GM12878 (cell line): ENCODE measurements at regions of chr11 and their contacts with region 1.

Region 1: DNA sequence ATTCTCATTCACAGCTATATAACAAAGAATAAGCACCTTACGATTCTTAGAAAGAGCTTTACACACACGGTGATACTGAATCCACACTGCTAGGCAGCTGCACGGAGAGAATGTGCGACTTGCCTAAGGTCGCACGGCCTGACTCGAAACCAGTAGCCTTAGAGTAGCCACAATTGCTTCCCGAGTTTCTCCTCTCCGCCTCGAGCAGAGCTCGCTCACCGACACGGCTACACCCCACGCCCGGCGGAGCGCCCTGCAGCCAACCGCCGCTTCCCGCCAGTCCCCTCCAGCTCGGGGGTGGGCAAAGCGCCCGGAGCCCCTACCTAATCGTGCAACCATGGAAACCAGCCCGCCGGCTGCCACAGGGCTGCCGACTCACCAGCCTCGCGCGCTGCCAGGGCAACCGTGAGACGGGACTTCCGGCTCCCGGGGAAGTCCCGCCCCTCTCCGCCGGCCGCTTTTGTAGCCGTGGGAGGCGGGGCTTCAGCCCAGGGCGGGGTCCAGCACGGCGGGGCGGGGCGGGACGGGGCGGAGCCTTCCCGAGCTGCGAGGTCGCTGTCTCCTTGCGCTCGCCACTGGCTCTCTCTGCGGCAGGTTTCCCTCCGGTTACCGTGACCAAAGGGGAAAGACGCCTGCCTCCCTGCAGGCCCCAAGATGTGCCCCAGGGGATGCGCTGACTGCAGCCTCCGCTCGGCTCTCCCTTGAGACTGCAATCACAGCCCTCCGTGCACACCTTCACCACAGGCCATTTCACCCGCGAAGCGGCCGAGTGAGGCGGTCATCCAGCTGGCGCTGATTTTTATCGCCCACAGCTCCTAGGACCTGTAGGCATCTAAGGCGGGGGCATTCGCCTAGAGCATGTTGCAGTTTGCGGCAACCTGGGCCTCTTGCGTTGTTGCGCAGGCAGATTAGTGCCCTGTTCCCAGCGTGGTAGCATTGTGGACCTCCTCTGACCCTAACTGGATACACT is 1.1 kb downstream of the BSCL2 start:
- DNase-seq: peak; percentile 50
- ATAC-seq: peak; percentile 81
- H3K4me3 ChIP-seq: peak overlapping the region; percentile 79
- H3K27ac ChIP-seq: peak overlapping the region; percentile 51
- H3K4me1 ChIP-seq: peaks cover 29% of the 10 kb centered on the region
- H3K27me3 ChIP-seq: no peaks in the 10 kb centered on the region
- CTCF ChIP-seq: no peak
- EP300 ChIP-seq: no peak
- POLR2A ChIP-seq: peak; percentile 78
- RAD21 ChIP-seq: no peak

Region 2: GRCh38 chr11:62601394-62602140 is 104.6 kb before region 1 on chr11 and contains the start of gene MTA2:
- CTCF ChIA-PET with region 1: no interaction called
- POLR2A ChIA-PET with region 1: interaction called, 7 read pairs
- RAD21 ChIA-PET with region 1: interaction called, 4 read pairs
- SMC1A ChIA-PET with region 1: interaction called, 3 read pairs
- in situ Hi-C with region 1: no loop called
- intact Hi-C with region 1: loop called (anchors 5 kb)
- DNase-seq: peak; percentile 87
- ATAC-seq: peak; percentile 92
- H3K4me3 ChIP-seq: peak within 1 kb of the TSS; percentile 91
- H3K27ac ChIP-seq: peak within 1 kb of the TSS; percentile 97
- H3K4me1 ChIP-seq: peaks cover 19% of the 10 kb centered on the region
- H3K27me3 ChIP-seq: no peaks in the 10 kb centered on the region
- CTCF ChIP-seq: 0 out of 6 replicates have a peak, but pooled peaks of 1 of the 3 experiments have one; percentile 7
- EP300 ChIP-seq: no peak
- POLR2A ChIP-seq: peak; percentile 85
- RAD21 ChIP-seq: no peak
- polyA plus RNA-seq, gene MTA2: 6.7 to 6.8 TPM

Region 3: GRCh38 chr11:62671575-62672389 is 34.4 kb before region 1 on chr11 and contains the starts of genes LBHD1 and UQCC3:
- CTCF ChIA-PET with region 1: no interaction called
- POLR2A ChIA-PET with region 1: interaction called, 18 read pairs
- RAD21 ChIA-PET with region 1: interaction called, 3 read pairs
- SMC1A ChIA-PET with region 1: no interaction called
- in situ Hi-C with region 1: no loop called
- intact Hi-C with region 1: no loop called
- DNase-seq: no peak
- ATAC-seq: peak; percentile 89
- H3K4me3 ChIP-seq: peak within 1 kb of the TSS; percentile 88
- H3K27ac ChIP-seq: peak within 1 kb of the TSS; percentile 75
- H3K4me1 ChIP-seq: peaks cover 19% of the 10 kb centered on the region
- H3K27me3 ChIP-seq: no peaks in the 10 kb centered on the region
- CTCF ChIP-seq: no peak
- EP300 ChIP-seq: no peak
- POLR2A ChIP-seq: peak; percentile 82
- RAD21 ChIP-seq: no peak
- polyA plus RNA-seq, gene LBHD1: 0.79 to 2.4 TPM
- polyA plus RNA-seq, gene UQCC3: 2.0 to 4.6 TPM

Region 4: GRCh38 chr11:62694455-62695167 is 11.6 kb before region 1 on chr11:
- CTCF ChIA-PET with region 1: interaction called, 21 read pairs
- POLR2A ChIA-PET with region 1: no interaction called
- RAD21 ChIA-PET with region 1: no interaction called
- SMC1A ChIA-PET with region 1: no interaction called
- in situ Hi-C with region 1: no loop called
- intact Hi-C with region 1: no loop called
- DNase-seq: no peak
- ATAC-seq: peak; percentile 99
- H3K4me3 ChIP-seq: no peak overlapping the region
- H3K27ac ChIP-seq: no peak overlapping the region
- H3K4me1 ChIP-seq: no peaks in the 10 kb centered on the region
- H3K27me3 ChIP-seq: no peaks in the 10 kb centered on the region
- CTCF ChIP-seq: peak; percentile 79 to 86 (median 82)
- EP300 ChIP-seq: no peak
- POLR2A ChIP-seq: no peak
- RAD21 ChIP-seq: peak; percentile 83

Region 5: GRCh38 chr11:62771144-62772021 is 65.2 kb after region 1 on chr11 and contains the start of gene TAF6L:
- CTCF ChIA-PET with region 1: interaction called, 6 read pairs
- POLR2A ChIA-PET with region 1: interaction called, 19 read pairs
- RAD21 ChIA-PET with region 1: interaction called, 6 read pairs
- SMC1A ChIA-PET with region 1: interaction called, 3 read pairs
- in situ Hi-C with region 1: no loop called
- intact Hi-C with region 1: no loop called
- DNase-seq: peak; percentile 77
- ATAC-seq: peak; percentile 92
- H3K4me3 ChIP-seq: peak within 1 kb of the TSS; percentile 86
- H3K27ac ChIP-seq: peak within 1 kb of the TSS; percentile 82
- H3K4me1 ChIP-seq: peaks cover 17% of the 10 kb centered on the region
- H3K27me3 ChIP-seq: no peaks in the 10 kb centered on the region
- CTCF ChIP-seq: no peak
- EP300 ChIP-seq: 0 out of 4 replicates have a peak, but pooled peaks of 1 of the 2 experiments have one; percentile 6
- POLR2A ChIP-seq: peak; percentile 83
- RAD21 ChIP-seq: no peak
- polyA plus RNA-seq, gene TAF6L: 0.15 to 0.39 TPM

Region 6: GRCh38 chr11:62831520-62832335 is 125.6 kb after region 1 on chr11 and contains the start of gene STX5:
- CTCF ChIA-PET with region 1: interaction called, 3 read pairs
- POLR2A ChIA-PET with region 1: interaction called, 10 read pairs
- RAD21 ChIA-PET with region 1: no interaction called
- SMC1A ChIA-PET with region 1: no interaction called
- in situ Hi-C with region 1: no loop called
- intact Hi-C with region 1: no loop called
- DNase-seq: peak; percentile 93
- ATAC-seq: peak; percentile 93
- H3K4me3 ChIP-seq: peak within 1 kb of the TSS; percentile 99
- H3K27ac ChIP-seq: peak within 1 kb of the TSS; percentile 84
- H3K4me1 ChIP-seq: peaks cover 8% of the 10 kb centered on the region
- H3K27me3 ChIP-seq: no peaks in the 10 kb centered on the region
- CTCF ChIP-seq: no peak
- EP300 ChIP-seq: 0 out of 4 replicates have a peak, but pooled peaks of 1 of the 2 experiments have one; percentile 16
- POLR2A ChIP-seq: peak; percentile 88
- RAD21 ChIP-seq: no peak
- polyA plus RNA-seq, gene STX5: 3.8 to 4.5 TPM

Region 7: GRCh38 chr11:62922658-62923431 is 216.7 kb after region 1 on chr11:
- CTCF ChIA-PET with region 1: no interaction called
- POLR2A ChIA-PET with region 1: no interaction called
- RAD21 ChIA-PET with region 1: no interaction called
- SMC1A ChIA-PET with region 1: no interaction called
- in situ Hi-C with region 1: no loop called
- intact Hi-C with region 1: no loop called
- DNase-seq: no peak
- ATAC-seq: peak; percentile 73
- H3K4me3 ChIP-seq: no peak overlapping the region
- H3K27ac ChIP-seq: no peak overlapping the region
- H3K4me1 ChIP-seq: peaks cover 19% of the 10 kb centered on the region
- H3K27me3 ChIP-seq: peaks cover 12 to 20% of the 10 kb centered on the region in 2 experiments
- CTCF ChIP-seq: peak; percentile 31 to 57 (median 45)
- EP300 ChIP-seq: no peak
- POLR2A ChIP-seq: no peak
- RAD21 ChIP-seq: peak; percentile 28; the same call in 1 of the 2 replicates